ENCODE measurements at regions of chr2 and their contacts with region 1.

Region 1: GRCh38 chr2:156526950-156527636 is 90.9 kb downstream of the GPD2 start:
- DNase-seq: no peak
- H3K4me3 Mint-ChIP-seq: no peak overlapping the region
- H3K27ac Mint-ChIP-seq: no peak overlapping the region
- H3K4me1 Mint-ChIP-seq: peaks cover 9% of the 10 kb centered on the region
- H3K27me3 Mint-ChIP-seq: no peaks in the 10 kb centered on the region

Region 2: DNA sequence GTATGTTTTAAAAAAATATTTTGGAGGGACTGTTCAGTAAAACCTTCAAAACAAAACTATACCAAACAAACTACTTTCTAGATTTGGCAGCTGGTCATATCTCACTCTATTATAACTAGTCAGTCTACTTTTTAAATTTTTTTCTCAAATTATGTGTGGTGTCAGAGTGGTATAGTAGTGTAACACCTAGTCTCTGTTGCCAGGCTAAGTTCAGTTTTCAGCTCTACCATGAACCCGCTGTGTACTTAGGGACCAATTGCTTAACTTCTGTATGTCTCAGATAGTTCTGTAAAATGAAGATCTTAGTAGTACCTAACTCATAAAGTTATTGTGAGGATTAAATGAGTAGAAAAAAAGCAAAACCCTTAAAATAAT is 36.6 kb before region 1 on chr2:
- CTCF ChIA-PET with region 1: no interaction called
- intact Hi-C with region 1: loop called (anchors 1 kb)
- DNase-seq: no peak
- H3K4me3 Mint-ChIP-seq: no peak overlapping the region
- H3K27ac Mint-ChIP-seq: no peak overlapping the region
- H3K4me1 Mint-ChIP-seq: peaks cover 40% of the 10 kb centered on the region
- H3K27me3 Mint-ChIP-seq: no peaks in the 10 kb centered on the region

Region 3: DNA sequence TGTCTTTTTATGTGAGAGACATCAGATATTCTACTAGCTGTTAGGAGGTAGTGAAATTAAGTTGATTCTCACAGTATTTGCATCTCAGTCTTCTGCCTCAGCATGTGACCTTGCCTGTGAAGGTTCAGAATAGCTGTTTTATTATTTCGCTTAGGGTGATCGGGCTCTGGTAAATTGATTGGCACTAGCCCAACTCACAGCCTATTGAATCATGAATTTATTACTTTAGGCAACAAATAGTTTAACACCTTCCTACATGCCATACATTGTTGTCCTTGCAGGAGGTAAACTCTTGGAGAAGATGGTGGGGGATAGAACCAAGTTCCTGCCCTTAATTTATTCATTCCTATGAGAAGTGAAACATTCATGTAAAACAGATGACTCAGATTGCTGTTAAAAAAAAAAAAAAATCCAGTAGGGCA is 11.0 kb after region 1 on chr2:
- CTCF ChIA-PET with region 1: no interaction called
- intact Hi-C with region 1: loop called (anchors 1 kb)
- DNase-seq: no peak
- H3K4me3 Mint-ChIP-seq: no peak overlapping the region
- H3K27ac Mint-ChIP-seq: no peak overlapping the region
- H3K4me1 Mint-ChIP-seq: peaks cover 39% of the 10 kb centered on the region
- H3K27me3 Mint-ChIP-seq: no peaks in the 10 kb centered on the region